Colonic mucosa (tissue), 4 donors: ENCODE measurements at regions of chr1 and their contacts with region 1.

Region 1: DNA sequence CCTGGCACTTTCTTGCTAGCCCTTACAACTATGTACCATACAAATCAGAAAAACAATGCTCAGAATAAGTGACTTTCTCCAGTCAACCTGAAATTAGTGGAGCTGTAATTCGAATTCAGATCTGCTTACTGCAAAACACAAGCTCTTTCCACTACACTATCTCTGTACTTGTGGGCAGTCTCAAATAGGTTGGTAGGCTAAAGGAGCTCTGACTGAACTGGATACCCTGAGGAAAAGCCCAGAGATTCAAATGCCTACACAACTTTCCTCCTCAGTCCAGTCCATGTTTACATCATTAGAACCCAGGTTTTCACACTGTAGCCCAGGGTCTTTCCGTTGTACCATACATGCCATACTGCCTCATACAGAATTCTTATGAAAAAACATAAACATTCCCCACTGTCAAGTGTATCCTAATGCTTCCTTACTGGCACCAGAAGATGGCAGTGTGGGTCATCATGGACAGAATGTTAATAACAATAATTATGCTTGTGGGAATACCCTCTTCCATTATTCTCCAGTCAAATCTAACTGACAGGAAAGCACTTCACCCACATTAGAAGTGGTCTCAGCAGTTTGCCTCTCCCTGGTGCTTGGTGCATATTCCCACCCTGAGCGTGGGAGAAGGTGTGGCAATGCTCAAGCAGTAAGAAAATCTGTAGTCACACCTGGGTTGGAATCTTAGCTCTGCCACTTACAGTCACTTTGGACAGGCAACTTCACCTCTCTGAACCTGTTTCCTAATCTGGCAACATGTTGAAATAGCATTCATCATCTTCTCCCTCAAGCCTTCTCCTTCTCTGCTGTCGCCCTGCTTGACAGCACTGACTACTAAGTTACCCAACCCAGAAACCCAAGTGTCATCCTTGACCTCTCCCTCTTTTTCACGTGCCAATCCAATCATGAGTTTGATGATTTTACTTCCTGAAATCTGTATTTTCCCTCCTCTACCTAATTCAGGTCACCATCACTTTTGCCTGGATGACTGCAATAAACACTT is 14.4 kb upstream of the ZFYVE9 start:
- DNase-seq: peak; percentile 47
- H3K4me3 ChIP-seq: no peak overlapping the region
- H3K27ac ChIP-seq: no peak overlapping the region
- H3K4me1 ChIP-seq: no peaks in the 10 kb centered on the region
- H3K27me3 ChIP-seq: no peaks in the 10 kb centered on the region
- CTCF ChIP-seq: peak; percentile 64

Region 2: DNA sequence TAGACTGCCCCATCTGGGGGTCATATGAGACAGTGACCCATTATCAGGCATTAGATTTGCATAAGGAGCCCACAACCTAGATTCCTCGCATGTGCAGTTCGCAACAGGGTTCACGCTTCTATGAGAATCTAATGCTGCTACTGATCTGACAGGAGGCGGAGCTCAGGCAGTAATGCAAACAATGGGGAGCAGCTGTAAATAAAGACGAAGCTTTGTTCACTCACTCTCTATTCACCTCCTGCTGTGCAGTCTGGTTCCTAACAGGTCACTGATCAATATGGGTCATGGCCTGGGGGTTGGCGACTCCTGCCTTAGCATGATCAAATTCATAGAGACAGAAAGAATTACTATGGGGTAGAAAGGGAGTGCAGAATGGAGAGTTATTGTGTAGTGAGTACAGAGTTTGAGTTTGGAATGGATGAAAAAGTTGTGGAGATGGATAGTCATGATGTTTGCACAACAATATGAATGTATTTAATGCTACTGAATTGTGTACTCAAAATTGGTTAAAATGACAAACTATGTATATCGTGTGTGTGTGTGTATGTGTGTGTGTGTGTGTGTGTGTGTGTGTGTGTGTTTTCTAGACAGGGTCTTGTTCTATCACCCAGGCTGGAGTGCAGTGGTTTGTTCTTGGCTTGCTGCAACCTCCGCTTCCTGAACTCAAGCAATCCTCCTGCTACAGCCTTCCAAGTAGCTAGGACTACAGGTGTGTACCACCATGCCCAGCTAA is 29.2 kb before region 1 on chr1:
- intact Hi-C with region 1: no loop called
- DNase-seq: no peak
- H3K4me3 ChIP-seq: no peak overlapping the region
- H3K27ac ChIP-seq: no peak overlapping the region
- H3K4me1 ChIP-seq: no peaks in the 10 kb centered on the region
- H3K27me3 ChIP-seq: no peaks in the 10 kb centered on the region
- CTCF ChIP-seq: no peak

Region 3: GRCh38 chr1:52294580-52294979 is 167.1 kb after region 1 on chr1:
- intact Hi-C with region 1: loop called (anchors 2 kb)
- DNase-seq: no peak
- H3K4me3 ChIP-seq: no peak overlapping the region
- H3K27ac ChIP-seq: no peak overlapping the region
- H3K4me1 ChIP-seq: no peaks in the 10 kb centered on the region
- H3K27me3 ChIP-seq: no peaks in the 10 kb centered on the region
- CTCF ChIP-seq: no peak